ENCODE measurements at regions of chrX and their contacts with region 1.

Region 1: DNA sequence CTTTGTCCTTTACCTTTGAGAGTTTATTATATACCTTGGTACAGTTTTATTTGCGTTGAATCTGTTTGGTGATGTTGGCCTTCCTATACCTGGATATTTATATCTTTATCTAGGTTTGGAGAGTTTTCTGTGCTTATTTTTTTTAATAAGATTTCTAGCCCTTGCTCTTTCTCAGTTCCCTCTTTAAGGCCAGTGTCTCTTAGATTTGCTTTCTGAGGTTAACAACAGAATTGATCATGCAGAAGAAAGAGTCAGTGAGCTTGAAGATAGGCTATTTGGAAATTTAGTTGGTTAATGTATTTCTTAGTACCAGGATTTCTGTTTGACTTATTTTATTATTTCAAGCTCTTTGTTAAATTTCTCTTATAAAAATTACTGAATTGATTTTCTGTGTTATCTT is 12.7 kb upstream of the TAF7L start:
- DNase-seq: no peak
- H3K4me3 ChIP-seq: no peak overlapping the region
- H3K27ac ChIP-seq: no peak overlapping the region
- H3K4me1 ChIP-seq: no peaks in the 10 kb centered on the region
- H3K27me3 ChIP-seq: no peaks in the 10 kb centered on the region
- CTCF ChIP-seq: no peak

Region 2: GRCh38 chrX:101287402-101287801 is 16.4 kb before region 1 on chrX:
- CTCF ChIA-PET with region 1: no interaction called
- POLR2A ChIA-PET with region 1: interaction called, 14 read pairs
- intact Hi-C with region 1: no loop called
- DNase-seq: peak; percentile 58
- H3K4me3 ChIP-seq: no peak overlapping the region
- H3K27ac ChIP-seq: no peak overlapping the region
- H3K4me1 ChIP-seq: no peaks in the 10 kb centered on the region
- H3K27me3 ChIP-seq: no peaks in the 10 kb centered on the region
- CTCF ChIP-seq: peak; percentile 68

Measured in A673 (cell line).